Activated B cell treated with CpG ODN at 0.5 μM for 24 hours (primary cell): ENCODE measurements at regions of chr16 and their contacts with region 1.

Region 1: GRCh38 chr16:52976539-52977167 is 76.0 kb downstream of the CHD9NB start:
- DNase-seq: no peak
- ATAC-seq: no peak
- H3K4me3 Mint-ChIP-seq: no peak overlapping the region
- H3K27ac Mint-ChIP-seq: no peak overlapping the region
- H3K4me1 Mint-ChIP-seq: no peaks in the 10 kb centered on the region
- H3K27me3 Mint-ChIP-seq: peaks cover 46% of the 10 kb centered on the region
- CTCF ChIP-seq: no peak

Region 2: DNA sequence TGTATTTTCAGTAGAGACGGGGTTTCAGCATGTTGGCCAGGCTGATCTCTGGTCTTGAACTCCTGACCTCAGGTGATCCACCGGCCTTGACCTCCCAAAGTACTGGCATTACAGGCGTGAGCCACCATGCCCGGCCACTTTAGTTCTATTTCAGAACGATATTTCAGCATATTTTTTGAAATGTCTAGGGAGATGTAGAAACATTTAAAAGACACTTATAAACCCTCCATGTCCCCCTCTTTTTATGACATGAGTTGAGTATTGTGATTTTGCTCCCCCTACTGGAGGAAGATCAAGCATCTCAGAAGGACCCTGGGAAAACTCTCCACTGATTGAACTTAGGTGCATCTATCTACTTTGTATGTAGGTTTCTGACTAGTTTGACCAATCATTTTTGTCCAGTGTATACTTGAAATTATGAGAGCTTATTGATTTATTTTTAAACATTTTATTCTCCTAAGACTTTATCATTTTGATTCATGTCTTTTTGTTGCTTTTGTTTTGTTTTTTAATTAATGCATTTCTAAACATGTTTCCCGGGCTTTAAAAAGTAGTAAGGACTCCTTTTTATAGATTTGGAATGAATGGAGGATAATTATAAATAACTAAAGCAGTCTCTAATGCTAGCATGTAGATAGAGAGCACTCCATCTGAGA is 183.3 kb after region 1 on chr16:
- CTCF ChIA-PET with region 1: no interaction called
- POLR2A ChIA-PET with region 1: no interaction called
- intact Hi-C with region 1: loop called (anchors 2 kb)
- DNase-seq: no peak
- ATAC-seq: peak; percentile 81
- H3K4me3 Mint-ChIP-seq: no peak overlapping the region
- H3K27ac Mint-ChIP-seq: peak overlapping the region; percentile 18
- H3K4me1 Mint-ChIP-seq: peaks cover 4% of the 10 kb centered on the region
- H3K27me3 Mint-ChIP-seq: no peaks in the 10 kb centered on the region
- CTCF ChIP-seq: peak; percentile 88

Region 3: DNA sequence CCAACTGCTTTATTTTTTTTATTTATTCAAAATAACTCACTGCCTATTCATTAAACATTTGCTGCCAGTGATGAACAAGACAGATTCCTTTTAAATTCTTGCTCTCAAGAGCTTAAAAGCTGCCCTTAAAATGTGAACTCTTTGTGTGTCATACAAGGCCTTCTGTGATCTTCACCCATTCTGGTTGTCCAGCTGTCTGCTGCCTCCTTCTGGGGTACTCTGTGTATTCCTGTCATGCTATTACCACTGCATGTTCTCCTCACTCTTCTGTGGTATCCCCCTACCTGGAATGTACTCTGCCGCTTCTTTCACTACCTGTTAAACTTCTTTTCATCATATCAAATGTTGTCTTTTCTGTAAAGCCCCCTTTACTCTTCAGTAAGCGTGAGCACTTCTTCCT is 243.9 kb after region 1 on chr16:
- CTCF ChIA-PET with region 1: interaction called, 5 read pairs
- POLR2A ChIA-PET with region 1: no interaction called
- intact Hi-C with region 1: loop called (anchors 2 kb)
- DNase-seq: no peak
- ATAC-seq: peak; percentile 60
- H3K4me3 Mint-ChIP-seq: no peak overlapping the region
- H3K27ac Mint-ChIP-seq: no peak overlapping the region
- H3K4me1 Mint-ChIP-seq: peaks cover 14% of the 10 kb centered on the region
- H3K27me3 Mint-ChIP-seq: no peaks in the 10 kb centered on the region
- CTCF ChIP-seq: no peak

Region 4: DNA sequence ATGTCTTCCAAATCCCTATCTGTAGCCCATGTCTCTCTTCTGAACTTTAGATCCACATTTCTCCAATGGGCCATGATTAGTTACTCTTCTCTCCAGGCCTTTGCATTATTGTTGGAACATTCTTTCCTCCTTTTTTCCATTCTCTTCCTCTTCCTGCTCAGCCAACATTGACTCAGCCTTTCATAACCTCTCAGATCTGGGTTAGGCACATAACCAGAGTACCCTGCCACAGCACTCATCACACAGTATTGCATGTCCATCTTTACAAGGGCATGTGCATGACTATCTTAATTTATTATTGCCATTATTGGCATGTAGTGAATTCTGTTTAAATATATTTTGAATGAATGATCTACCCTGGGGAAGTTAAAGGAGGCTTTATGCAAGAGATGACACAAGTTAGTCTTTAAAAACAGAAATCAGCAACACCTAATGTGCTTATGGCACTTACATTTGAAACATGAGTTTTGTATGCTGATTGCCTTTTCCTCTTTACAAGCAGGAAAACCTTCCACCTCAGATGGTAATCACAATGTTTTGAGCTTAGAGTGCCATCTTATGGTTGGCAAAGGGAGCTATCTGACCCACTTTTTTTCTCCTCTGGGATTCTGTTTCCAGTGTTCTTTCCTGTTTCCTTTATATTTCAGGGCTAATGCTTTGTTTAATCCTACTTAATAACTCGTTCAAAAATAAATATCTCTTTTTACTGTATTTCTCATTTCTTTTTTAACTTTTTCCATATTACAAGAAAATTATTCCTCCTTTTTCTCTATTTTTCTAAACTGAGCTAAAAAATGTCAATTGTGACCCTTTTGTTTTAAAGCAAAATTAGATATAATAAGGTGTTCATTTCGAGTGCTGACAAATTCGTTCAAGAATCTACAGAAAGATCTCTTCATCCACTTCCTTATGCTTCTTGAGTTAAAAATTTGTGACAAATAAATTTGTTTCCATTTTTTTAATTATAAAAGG is 306.6 kb after region 1 on chr16:
- CTCF ChIA-PET with region 1: interaction called, 17 read pairs
- POLR2A ChIA-PET with region 1: no interaction called
- intact Hi-C with region 1: loop called (anchors 5 kb)
- DNase-seq: no peak
- ATAC-seq: no peak
- H3K4me3 Mint-ChIP-seq: no peak overlapping the region
- H3K27ac Mint-ChIP-seq: no peak overlapping the region
- H3K4me1 Mint-ChIP-seq: no peaks in the 10 kb centered on the region
- H3K27me3 Mint-ChIP-seq: no peaks in the 10 kb centered on the region
- CTCF ChIP-seq: no peak

Region 5: DNA sequence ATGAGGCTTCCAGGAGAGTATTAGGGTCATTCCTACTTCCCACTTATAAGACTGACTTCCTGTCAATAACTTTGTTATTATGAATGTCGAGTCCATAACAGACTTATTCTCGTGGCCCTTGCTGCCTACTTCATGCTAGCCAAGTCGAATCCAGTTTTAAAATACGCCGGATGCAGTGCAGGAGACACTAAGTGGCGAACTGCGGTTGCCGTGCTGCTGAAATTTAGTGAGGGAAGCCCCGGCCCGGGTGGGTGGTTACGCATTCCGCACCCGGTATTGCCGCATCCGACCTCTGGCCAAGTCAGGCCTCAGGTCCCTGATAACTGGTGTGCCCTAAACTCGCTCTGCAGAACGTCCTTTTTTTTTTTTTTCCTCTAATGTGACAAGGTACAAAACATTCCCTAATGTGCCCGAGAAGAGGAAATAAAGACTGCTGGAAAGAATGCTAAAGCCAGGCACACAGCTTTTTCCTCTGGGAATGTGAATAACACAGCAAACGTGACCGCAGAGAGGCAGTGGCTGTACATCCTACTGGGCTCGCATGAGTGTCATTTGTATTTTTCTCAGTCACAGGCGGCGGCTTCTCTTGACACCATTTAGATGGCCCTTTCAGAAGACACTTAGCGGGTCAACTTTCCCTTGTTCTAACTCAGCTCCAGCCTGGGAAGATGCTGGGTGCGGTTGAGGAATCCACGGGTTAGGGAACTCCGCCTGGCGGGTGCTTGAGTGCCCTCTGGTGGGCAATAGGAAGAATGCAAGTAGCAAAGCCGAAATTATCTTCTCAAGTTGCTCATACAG is 533.5 kb after region 1 on chr16:
- CTCF ChIA-PET with region 1: no interaction called
- POLR2A ChIA-PET with region 1: no interaction called
- intact Hi-C with region 1: loop called (anchors 5 kb)
- DNase-seq: peak; percentile 38
- ATAC-seq: peak; percentile 81
- H3K4me3 Mint-ChIP-seq: peak overlapping the region; percentile 69
- H3K27ac Mint-ChIP-seq: no peak overlapping the region
- H3K4me1 Mint-ChIP-seq: peaks cover 13% of the 10 kb centered on the region
- H3K27me3 Mint-ChIP-seq: no peaks in the 10 kb centered on the region
- CTCF ChIP-seq: peak; percentile 92